H1 (cell line): ENCODE measurements at regions of chr5 and their contacts with region 1.

Region 1: GRCh38 chr5:35003018-35003957 is 44.5 kb downstream of the AGXT2 start:
- DNase-seq: peak in 1 of 2 experiments; percentile 86
- H3K4me3 ChIP-seq: no peak overlapping the region
- H3K27ac ChIP-seq: no peak overlapping the region
- H3K4me1 ChIP-seq: peaks cover 0 to 4% (median 0%) of the 10 kb centered on the region in 4 experiments; a peak in 1 of 7 replicates
- H3K27me3 ChIP-seq: no peaks in the 10 kb centered on the region
- CTCF ChIP-seq: peak; percentile 69 to 86 (median 76)
- EP300 ChIP-seq: no peak
- POLR2A ChIP-seq: no peak
- RAD21 ChIP-seq: peak; percentile 80 to 84

Region 2: DNA sequence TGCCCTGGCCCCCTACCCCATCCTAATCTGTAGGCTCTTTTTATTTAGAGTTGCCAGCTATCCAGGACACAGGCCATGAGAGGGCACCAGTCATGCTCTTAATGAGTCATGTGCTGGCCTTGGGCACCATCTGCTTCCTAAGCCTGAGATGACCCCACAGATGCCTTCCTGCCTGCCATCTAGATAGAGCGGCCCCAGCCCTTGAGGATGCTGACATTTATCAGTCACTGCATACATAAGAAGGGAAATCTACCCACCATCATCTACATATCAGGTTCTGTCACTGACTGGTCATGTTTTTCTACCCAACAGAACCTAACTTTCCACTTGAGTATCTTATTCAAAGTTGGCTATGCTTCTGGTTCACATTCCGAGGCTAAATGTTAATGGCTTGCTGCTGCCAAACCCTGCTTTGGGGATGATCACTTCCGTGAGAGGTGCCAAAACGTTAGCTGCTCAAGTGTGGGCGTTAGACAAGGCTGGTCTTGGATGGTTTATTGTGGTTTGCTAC is 214.2 kb before region 1 on chr5:
- CTCF ChIA-PET with region 1: no interaction called
- POLR2A ChIA-PET with region 1: no interaction called
- DNase-seq: no peak
- H3K4me3 ChIP-seq: no peak overlapping the region
- H3K27ac ChIP-seq: no peak overlapping the region
- H3K4me1 ChIP-seq: peaks cover 0 to 4% (median 0%) of the 10 kb centered on the region in 4 experiments; a peak in 1 of 7 replicates
- H3K27me3 ChIP-seq: no peaks in the 10 kb centered on the region
- CTCF ChIP-seq: peak in 1 of 3 experiments; percentile 16; a peak in 2 of 4 replicates
- EP300 ChIP-seq: no peak
- POLR2A ChIP-seq: no peak
- RAD21 ChIP-seq: peak; percentile 7 to 27; a peak in 2 of 4 replicates

Region 3: GRCh38 chr5:34944044-34944443 is 59.2 kb before region 1 on chr5:
- CTCF ChIA-PET with region 1: interaction called, 11 read pairs
- POLR2A ChIA-PET with region 1: no interaction called
- DNase-seq: no peak
- H3K4me3 ChIP-seq: no peak overlapping the region
- H3K27ac ChIP-seq: no peak overlapping the region
- H3K4me1 ChIP-seq: no peaks in the 10 kb centered on the region
- H3K27me3 ChIP-seq: no peaks in the 10 kb centered on the region
- CTCF ChIP-seq: no peak
- EP300 ChIP-seq: no peak
- POLR2A ChIP-seq: no peak
- RAD21 ChIP-seq: no peak

Region 4: DNA sequence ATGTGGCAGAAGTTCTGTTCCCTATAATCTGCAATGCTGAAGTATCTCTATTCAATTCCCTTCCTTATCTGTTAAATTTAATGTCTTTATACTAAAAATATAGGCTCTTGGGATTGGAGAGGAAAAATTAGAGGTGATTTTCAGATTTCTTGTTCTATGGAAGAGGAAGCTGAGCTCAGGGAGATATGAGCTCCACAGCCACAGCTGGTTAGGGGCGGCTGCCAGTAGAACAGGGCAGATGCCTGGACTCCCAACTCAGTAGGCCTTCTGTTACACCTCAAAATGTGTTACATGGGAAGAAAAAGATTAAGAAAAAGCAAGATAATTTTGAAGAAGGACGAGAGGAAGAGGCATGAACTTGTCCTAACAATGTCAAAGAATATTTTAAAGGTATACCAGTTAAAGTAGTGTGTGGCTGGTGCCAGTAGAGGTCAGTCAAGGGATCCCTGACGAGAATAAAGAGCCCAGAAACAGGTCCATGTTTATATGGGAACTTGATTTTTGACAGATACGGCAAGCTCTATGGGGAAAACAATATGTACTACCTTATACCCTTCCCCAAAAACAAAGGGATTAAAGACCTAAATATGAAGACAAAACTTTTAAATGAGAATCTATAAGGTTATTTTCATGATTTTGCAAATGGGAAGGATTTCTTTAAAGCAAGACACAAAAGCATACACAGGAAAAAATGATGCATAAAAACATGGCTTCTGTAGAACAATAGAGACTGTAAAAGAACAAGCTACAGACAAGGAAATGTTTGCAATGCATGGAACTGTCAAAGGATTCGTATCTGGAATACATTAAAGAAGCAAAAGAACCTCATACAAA is 45.2 kb before region 1 on chr5:
- CTCF ChIA-PET with region 1: interaction called, 69 read pairs
- POLR2A ChIA-PET with region 1: no interaction called
- DNase-seq: no peak
- H3K4me3 ChIP-seq: no peak overlapping the region
- H3K27ac ChIP-seq: no peak overlapping the region
- H3K4me1 ChIP-seq: no peaks in the 10 kb centered on the region
- H3K27me3 ChIP-seq: no peaks in the 10 kb centered on the region
- CTCF ChIP-seq: peak in 2 of 3 experiments; percentile 51 to 70; a peak in 3 of 4 replicates
- EP300 ChIP-seq: no peak
- POLR2A ChIP-seq: no peak
- RAD21 ChIP-seq: peak; percentile 63 to 64

Region 5: DNA sequence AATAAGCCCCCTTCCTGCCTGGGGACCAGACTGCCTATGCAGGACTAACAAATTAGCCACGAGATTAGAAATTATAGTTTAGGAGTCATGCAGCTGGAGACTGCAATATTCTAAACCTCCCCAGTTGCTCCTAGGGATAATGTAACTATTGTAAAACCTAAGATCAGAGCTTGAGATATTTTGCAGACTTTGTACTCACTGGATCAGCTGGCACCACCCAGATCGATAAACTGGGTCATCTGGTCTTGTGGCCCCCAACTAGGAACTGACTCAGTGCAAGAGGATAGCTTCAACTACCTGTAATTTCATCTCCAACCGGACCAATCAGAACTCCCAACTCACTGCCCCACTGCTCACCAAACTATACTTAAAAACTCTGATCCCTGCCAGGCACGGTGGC is 35.7 kb before region 1 on chr5:
- CTCF ChIA-PET with region 1: interaction called, 69 read pairs
- POLR2A ChIA-PET with region 1: no interaction called
- DNase-seq: no peak
- H3K4me3 ChIP-seq: no peak overlapping the region
- H3K27ac ChIP-seq: no peak overlapping the region
- H3K4me1 ChIP-seq: no peaks in the 10 kb centered on the region
- H3K27me3 ChIP-seq: no peaks in the 10 kb centered on the region
- CTCF ChIP-seq: no peak
- EP300 ChIP-seq: no peak
- POLR2A ChIP-seq: no peak
- RAD21 ChIP-seq: no peak

Region 6: GRCh38 chr5:34991486-34992238 is 11.6 kb before region 1 on chr5:
- CTCF ChIA-PET with region 1: interaction called, 15 read pairs
- POLR2A ChIA-PET with region 1: no interaction called
- DNase-seq: no peak
- H3K4me3 ChIP-seq: no peak overlapping the region
- H3K27ac ChIP-seq: no peak overlapping the region
- H3K4me1 ChIP-seq: no peaks in the 10 kb centered on the region
- H3K27me3 ChIP-seq: no peaks in the 10 kb centered on the region
- CTCF ChIP-seq: no peak
- EP300 ChIP-seq: no peak
- POLR2A ChIP-seq: no peak
- RAD21 ChIP-seq: no peak

Region 7: GRCh38 chr5:35016174-35017051 is 13.1 kb after region 1 on chr5:
- CTCF ChIA-PET with region 1: interaction called, 14 read pairs
- POLR2A ChIA-PET with region 1: interaction called, 3 read pairs
- DNase-seq: no peak
- H3K4me3 ChIP-seq: no peak overlapping the region
- H3K27ac ChIP-seq: no peak overlapping the region
- H3K4me1 ChIP-seq: no peaks in the 10 kb centered on the region
- H3K27me3 ChIP-seq: no peaks in the 10 kb centered on the region
- CTCF ChIP-seq: no peak
- EP300 ChIP-seq: no peak
- POLR2A ChIP-seq: no peak
- RAD21 ChIP-seq: no peak